ENCODE measurements at regions of chr4 and their contacts with region 1.

Region 1: GRCh38 chr4:99462875-99463464 is 27.8 kb upstream of the ADH7 start:
- DNase-seq: peak; percentile 75
- ATAC-seq: peak; percentile 84
- H3K4me3 ChIP-seq: no peak overlapping the region
- H3K27ac ChIP-seq: no peak overlapping the region
- H3K4me1 ChIP-seq: peaks cover 12% of the 10 kb centered on the region
- H3K27me3 ChIP-seq: no peaks in the 10 kb centered on the region
- CTCF ChIP-seq: peak; percentile 87

Region 2: GRCh38 chr4:99117876-99118693 is 344.9 kb before region 1 on chr4:
- CTCF ChIA-PET with region 1: no interaction called
- POLR2A ChIA-PET with region 1: no interaction called
- intact Hi-C with region 1: loop called (anchors 1 kb)
- DNase-seq: peak; percentile 51
- ATAC-seq: no peak
- H3K4me3 ChIP-seq: peak overlapping the region; percentile 4; the same call in 1 of the 2 replicates
- H3K27ac ChIP-seq: no peak overlapping the region
- H3K4me1 ChIP-seq: no peaks in the 10 kb centered on the region
- H3K27me3 ChIP-seq: no peaks in the 10 kb centered on the region
- CTCF ChIP-seq: peak; percentile 63

Region 3: GRCh38 chr4:99201690-99202089 is 261.3 kb before region 1 on chr4:
- CTCF ChIA-PET with region 1: no interaction called
- POLR2A ChIA-PET with region 1: no interaction called
- intact Hi-C with region 1: loop called (anchors 1 kb)
- DNase-seq: no peak
- ATAC-seq: no peak
- H3K4me3 ChIP-seq: no peak overlapping the region
- H3K27ac ChIP-seq: no peak overlapping the region
- H3K4me1 ChIP-seq: no peaks in the 10 kb centered on the region
- H3K27me3 ChIP-seq: no peaks in the 10 kb centered on the region
- CTCF ChIP-seq: peak; percentile 30; the same call in 1 of the 2 replicates

Region 4: DNA sequence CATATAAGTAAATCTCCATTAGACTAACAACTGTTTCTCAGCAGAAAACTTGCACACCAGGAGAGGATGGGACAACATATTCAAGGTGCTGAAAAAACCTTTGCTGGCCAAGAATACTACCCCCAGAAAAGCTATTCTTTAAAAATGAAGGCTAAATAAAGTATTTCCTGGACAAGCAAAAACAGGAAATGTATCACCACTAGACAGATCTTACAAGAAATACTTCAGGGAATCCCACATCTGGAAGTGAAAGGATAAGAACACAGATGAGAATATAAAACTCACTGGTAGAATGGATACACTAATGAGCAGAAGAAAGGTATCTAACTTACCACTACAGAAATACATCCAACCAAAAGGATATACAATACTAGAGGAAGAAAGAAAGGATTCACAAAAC is 83.4 kb before region 1 on chr4:
- CTCF ChIA-PET with region 1: no interaction called
- POLR2A ChIA-PET with region 1: no interaction called
- intact Hi-C with region 1: loop called (anchors 1 kb)
- DNase-seq: no peak
- ATAC-seq: no peak
- H3K4me3 ChIP-seq: no peak overlapping the region
- H3K27ac ChIP-seq: no peak overlapping the region
- H3K4me1 ChIP-seq: no peaks in the 10 kb centered on the region
- H3K27me3 ChIP-seq: no peaks in the 10 kb centered on the region
- CTCF ChIP-seq: no peak

Region 5: GRCh38 chr4:99405433-99406115 is 57.4 kb before region 1 on chr4:
- CTCF ChIA-PET with region 1: no interaction called
- POLR2A ChIA-PET with region 1: no interaction called
- intact Hi-C with region 1: loop called (anchors 1 kb)
- DNase-seq: peak; percentile 83
- ATAC-seq: peak; percentile 61
- H3K4me3 ChIP-seq: no peak overlapping the region
- H3K27ac ChIP-seq: peak overlapping the region; percentile 69; the same call in 1 of the 2 replicates
- H3K4me1 ChIP-seq: peaks cover 17% of the 10 kb centered on the region
- H3K27me3 ChIP-seq: no peaks in the 10 kb centered on the region
- CTCF ChIP-seq: peak; percentile 85

Region 6: GRCh38 chr4:99572527-99573240 is 109.7 kb after region 1 on chr4:
- CTCF ChIA-PET with region 1: no interaction called
- POLR2A ChIA-PET with region 1: no interaction called
- intact Hi-C with region 1: no loop called
- DNase-seq: peak; percentile 23
- ATAC-seq: no peak
- H3K4me3 ChIP-seq: no peak overlapping the region
- H3K27ac ChIP-seq: no peak overlapping the region
- H3K4me1 ChIP-seq: no peaks in the 10 kb centered on the region
- H3K27me3 ChIP-seq: peaks cover 15% of the 10 kb centered on the region
- CTCF ChIP-seq: no peak